Posterior vena cava (tissue), 2 donors: ENCODE measurements at regions of chr18 and their contacts with region 1.

Region 1: DNA sequence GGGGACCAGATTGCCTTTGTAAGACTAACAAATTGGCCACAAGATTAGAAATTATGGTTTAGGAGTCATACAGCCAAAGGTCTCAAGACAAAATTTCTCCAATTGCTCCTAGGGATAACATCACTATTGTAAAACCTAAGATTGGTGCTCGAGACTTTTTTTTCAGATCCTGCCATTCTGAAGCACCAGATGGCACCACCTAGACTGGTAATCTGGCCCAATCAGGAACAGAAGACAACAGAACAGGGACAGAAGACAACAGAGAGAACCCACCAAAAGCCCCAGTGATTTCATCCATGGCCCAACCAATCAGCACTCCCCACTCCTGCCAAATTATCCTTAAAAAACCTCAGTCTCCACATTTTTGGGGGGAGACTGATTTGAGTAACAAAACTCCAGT is 66.8 kb downstream of the LINC00305 start:
- DNase-seq: no peak

Region 2: DNA sequence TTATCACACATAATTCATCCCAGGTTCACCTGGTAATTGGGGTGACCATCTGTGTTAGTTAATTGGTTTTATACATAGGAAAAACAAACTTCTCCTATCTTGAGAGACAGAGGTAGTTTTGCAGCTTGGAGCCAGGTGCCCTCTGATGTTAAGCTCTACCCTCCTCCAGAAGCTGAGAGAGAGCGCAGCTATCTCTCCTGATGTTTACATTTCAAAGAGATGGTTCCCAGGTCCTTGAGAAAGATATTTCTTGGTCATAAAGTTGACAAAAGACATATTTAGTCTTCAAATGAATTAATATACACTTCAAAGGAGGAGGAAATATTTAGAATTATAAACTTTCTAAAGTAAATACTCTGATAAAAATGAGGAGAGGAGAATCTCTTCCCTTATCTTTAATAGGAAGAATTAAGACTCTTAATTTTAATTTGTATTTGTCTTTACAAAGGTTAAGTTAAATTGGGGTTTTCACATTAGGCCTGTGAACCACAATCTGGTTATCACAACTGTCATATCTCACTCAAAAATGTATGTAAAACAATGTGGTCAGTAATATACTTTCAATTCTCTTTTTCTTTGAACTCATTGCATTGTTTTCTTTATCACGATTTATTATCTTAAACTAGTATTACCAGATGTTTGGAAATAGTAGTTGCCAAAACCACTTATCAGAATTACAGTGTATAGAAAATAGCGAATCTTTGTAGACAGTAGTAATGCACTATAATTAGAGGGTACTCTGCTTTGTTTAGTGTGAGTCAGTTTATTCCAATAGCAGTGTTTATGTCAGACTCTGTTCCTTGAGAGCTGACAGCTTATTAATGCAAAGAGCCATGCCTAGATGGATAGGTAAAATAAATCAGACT is 464.8 kb before region 1 on chr18:
- intact Hi-C with region 1: no loop called
- DNase-seq: no peak

Region 3: DNA sequence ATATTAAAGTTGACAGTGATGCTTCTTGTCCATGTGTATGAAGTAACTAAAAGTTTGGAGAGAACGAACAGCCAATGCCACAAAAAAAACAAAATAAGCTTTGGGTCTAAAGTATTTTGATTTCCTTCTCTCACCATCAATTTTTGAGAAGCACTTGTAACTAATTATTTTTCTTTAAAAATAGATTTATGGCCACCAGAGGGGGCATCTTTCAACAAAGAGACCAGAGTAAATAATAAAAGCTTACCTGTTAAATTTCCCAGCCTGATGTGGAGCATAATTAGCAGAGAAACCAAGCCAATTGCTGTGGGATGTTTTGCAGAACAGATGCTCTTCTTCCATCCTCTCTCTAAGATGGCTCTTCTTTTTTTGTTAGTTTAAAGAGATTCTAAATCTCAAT is 37.9 kb after region 1 on chr18:
- intact Hi-C with region 1: loop called in 1 of 2 experiments (anchors 2 kb)
- DNase-seq: no peak

Region 4: DNA sequence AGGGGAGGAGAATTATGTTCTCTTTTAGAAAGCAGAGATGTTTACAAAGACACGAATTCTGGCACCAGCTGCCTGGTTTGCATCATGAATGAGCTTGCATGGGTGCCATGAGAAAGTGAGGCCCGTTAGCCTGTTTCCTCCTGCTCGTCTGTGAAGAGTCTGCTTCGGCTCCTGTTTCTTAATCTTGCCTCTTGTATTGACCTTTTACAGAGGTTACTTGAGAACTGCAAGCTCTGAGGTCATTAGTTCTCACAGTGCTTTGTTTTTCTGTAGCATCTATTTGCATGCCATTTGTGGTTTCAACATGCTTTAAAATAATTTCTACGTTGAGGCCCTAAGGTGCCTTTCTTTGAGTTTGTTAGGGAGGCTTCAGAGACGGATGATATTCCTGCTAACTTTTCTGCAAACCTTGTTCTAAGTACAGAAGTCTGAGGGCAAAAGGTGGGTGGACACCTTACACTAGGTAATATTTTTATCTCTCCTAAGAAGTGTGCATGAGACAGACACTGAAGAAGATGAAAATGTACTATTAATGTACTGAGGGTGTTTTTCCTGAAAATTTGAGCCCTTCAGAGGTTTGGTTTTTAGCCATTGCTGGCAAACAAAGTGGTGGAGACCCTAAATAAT is 120.3 kb after region 1 on chr18:
- intact Hi-C with region 1: no loop called
- DNase-seq: no peak